ENCODE measurements at regions of chr5 and their contacts with region 1.

Region 1: GRCh38 chr5:12013351-12013750 is 109.1 kb upstream of the CTNND2 start:
- DNase-seq: no peak
- H3K4me3 ChIP-seq: no peak overlapping the region
- H3K27ac ChIP-seq: no peak overlapping the region
- H3K4me1 ChIP-seq: no peaks in the 10 kb centered on the region
- H3K27me3 ChIP-seq: no peaks in the 10 kb centered on the region
- CTCF ChIP-seq: no peak
- EP300 ChIP-seq: no peak
- POLR2A ChIP-seq: no peak

Region 2: DNA sequence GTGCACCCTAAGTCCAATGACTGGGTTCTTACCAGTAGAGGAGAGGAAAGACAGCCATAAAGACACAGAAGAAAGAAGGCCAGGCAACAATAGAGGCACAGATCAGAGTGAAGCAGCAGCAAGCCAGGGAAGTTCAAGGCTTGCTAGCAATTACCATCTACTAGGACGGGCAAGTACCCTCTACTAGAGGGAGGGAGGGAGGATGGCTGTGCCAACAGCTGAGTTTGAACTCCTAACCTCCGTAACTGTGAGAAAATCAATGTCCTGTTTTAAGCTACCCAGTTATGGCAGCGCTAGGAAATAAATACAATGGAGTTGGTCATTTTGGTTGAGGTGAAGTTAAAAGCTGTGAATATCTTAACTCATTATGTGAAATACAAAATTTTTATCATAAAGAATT is 882.7 kb after region 1 on chr5:
- in situ Hi-C with region 1: no loop called
- intact Hi-C with region 1: loop called (anchors 5 kb)
- DNase-seq: no peak
- H3K4me3 ChIP-seq: no peak overlapping the region
- H3K27ac ChIP-seq: no peak overlapping the region
- H3K4me1 ChIP-seq: no peaks in the 10 kb centered on the region
- H3K27me3 ChIP-seq: no peaks in the 10 kb centered on the region
- CTCF ChIP-seq: no peak
- EP300 ChIP-seq: no peak
- POLR2A ChIP-seq: no peak

Measured in transverse colon (tissue), 4 donors.